H1 (cell line): ENCODE measurements at regions of chr16 and their contacts with region 1.

Region 1: GRCh38 chr16:67115639-67116038 is 5.9 kb downstream of the PHAF1 start:
- DNase-seq: no peak
- H3K4me3 ChIP-seq: no peak overlapping the region
- H3K27ac ChIP-seq: no peak overlapping the region
- H3K4me1 ChIP-seq: 0 out of 7 replicates have a peak, but pooled peaks cover 0 to 2% (median 0%) of the 10 kb centered on the region in 4 experiments
- H3K27me3 ChIP-seq: no peaks in the 10 kb centered on the region
- CTCF ChIP-seq: no peak
- EP300 ChIP-seq: no peak
- POLR2A ChIP-seq: no peak
- RAD21 ChIP-seq: no peak

Region 2: DNA sequence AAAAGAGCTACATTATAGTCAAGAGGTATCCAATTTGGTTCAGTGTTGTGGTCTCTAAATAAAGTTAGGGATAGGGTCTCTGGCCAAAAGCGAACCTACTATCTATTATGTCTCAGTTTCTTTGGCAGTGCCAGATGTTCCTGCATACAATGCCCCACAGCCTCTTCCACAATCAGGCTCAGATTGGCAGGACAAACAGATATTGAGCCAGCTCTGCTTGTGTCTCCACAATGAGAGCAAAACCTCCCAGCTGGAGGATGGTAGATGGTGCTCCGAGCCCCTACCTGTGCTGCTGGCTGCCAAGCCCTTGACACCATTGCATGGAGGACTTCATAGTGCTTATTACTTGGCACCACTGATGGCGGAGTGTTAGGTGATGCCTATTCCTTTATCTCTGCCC is 13.8 kb after region 1 on chr16:
- CTCF ChIA-PET with region 1: interaction called, 11 read pairs
- POLR2A ChIA-PET with region 1: no interaction called
- DNase-seq: no peak
- H3K4me3 ChIP-seq: no peak overlapping the region
- H3K27ac ChIP-seq: no peak overlapping the region
- H3K4me1 ChIP-seq: no peaks in the 10 kb centered on the region
- H3K27me3 ChIP-seq: no peaks in the 10 kb centered on the region
- CTCF ChIP-seq: no peak
- EP300 ChIP-seq: no peak
- POLR2A ChIP-seq: no peak
- RAD21 ChIP-seq: no peak

Region 3: DNA sequence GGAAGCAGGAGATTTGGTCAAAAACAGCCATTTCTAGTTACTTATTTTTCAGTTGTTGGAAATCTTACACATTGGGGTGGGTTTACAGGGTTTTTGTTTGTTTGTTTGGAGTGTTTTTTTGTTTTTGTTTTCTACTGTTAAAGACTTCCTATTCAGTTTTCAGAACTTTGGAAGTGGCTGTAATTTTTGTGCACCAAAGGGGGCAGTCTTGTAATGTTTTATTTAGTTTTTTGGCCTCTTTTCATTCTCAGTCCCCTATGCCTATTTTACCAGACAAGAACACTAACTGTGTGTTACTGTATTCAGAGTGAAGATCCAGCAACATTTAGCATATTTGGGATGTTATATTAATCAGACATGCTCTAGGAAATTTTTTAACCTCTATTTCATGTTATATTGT is 257.0 kb after region 1 on chr16:
- CTCF ChIA-PET with region 1: no interaction called
- POLR2A ChIA-PET with region 1: no interaction called
- DNase-seq: no peak
- H3K4me3 ChIP-seq: no peak overlapping the region
- H3K27ac ChIP-seq: no peak overlapping the region
- H3K4me1 ChIP-seq: no peaks in the 10 kb centered on the region
- H3K27me3 ChIP-seq: peaks cover 0 to 5% (median 0%) of the 10 kb centered on the region in 4 experiments; a peak in 3 of 7 replicates
- CTCF ChIP-seq: peak in 2 of 3 experiments; percentile 28 to 35; a peak in 2 of 4 replicates
- EP300 ChIP-seq: no peak
- POLR2A ChIP-seq: no peak
- RAD21 ChIP-seq: peak; percentile 51 to 57